Spleen (tissue), 13 donors: ENCODE measurements at regions of chr3 and their contacts with region 1.

Region 1: GRCh38 chr3:11335056-11335608 is 62.9 kb downstream of the ATG7 start:
- DNase-seq: no peak
- H3K4me3 ChIP-seq: no peak overlapping the region
- H3K27ac ChIP-seq: no peak overlapping the region
- H3K4me1 ChIP-seq: no peaks in the 10 kb centered on the region
- H3K27me3 ChIP-seq: no peaks in the 10 kb centered on the region
- CTCF ChIP-seq: peak in 10 of 11 experiments; percentile 29 to 73 (median 62)
- POLR2A ChIP-seq: no peak

Region 2: GRCh38 chr3:11236595-11237461 is 98.3 kb before region 1 on chr3:
- intact Hi-C with region 1: loop called (anchors 5 kb)
- DNase-seq: peak; percentile 88
- H3K4me3 ChIP-seq: no peak overlapping the region
- H3K27ac ChIP-seq: no peak overlapping the region
- H3K4me1 ChIP-seq: peaks cover 0 to 8% (median 2%) of the 10 kb centered on the region in 6 donors
- H3K27me3 ChIP-seq: peaks cover 0 to 22% (median 0%) of the 10 kb centered on the region in 7 donors
- CTCF ChIP-seq: peak; percentile 29 to 87 (median 77)
- POLR2A ChIP-seq: no peak

Region 3: GRCh38 chr3:11392014-11392859 is 57.1 kb after region 1 on chr3:
- intact Hi-C with region 1: no loop called
- DNase-seq: no peak
- H3K4me3 ChIP-seq: no peak overlapping the region
- H3K27ac ChIP-seq: no peak overlapping the region
- H3K4me1 ChIP-seq: peaks cover 0 to 22% (median 12%) of the 10 kb centered on the region in 6 donors
- H3K27me3 ChIP-seq: no peaks in the 10 kb centered on the region
- CTCF ChIP-seq: no peak
- POLR2A ChIP-seq: no peak